CD14-positive monocyte (primary cell): ENCODE measurements at regions of chr17 and their contacts with region 1.

Region 1: DNA sequence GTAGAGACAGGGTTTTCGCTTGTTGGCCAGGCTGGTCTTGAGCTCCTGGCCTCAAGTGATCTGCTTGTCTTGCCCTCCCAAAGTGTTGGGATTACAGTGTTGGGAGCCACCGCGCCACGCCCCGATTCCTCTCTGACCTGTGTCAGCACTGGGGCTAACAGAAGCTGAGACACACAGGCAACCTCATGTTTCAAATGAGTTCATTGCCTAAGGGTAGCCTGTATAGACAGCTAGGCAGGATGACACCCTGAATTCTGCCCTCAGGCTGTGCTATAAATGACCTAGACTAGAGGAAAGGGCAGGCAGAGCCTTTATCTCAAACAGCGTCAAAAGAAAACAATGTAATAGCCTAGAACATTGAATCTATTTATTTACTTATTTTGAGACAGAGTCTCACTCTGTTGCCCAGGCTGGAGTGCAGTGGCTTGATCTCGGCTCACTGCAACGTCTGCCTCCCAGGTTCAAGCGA is 2.3 kb upstream of the CDK3 start:
- DNase-seq: no peak
- H3K4me3 ChIP-seq: no peak overlapping the region
- H3K4me3 Mint-ChIP-seq: no peak overlapping the region
- H3K27ac ChIP-seq: no peak overlapping the region
- H3K27ac Mint-ChIP-seq: peak overlapping the region in 1 of 7 donors; percentile 13
- H3K4me1 ChIP-seq: peaks cover 21 to 24% of the 10 kb centered on the region in 2 donors
- H3K4me1 Mint-ChIP-seq: peaks cover 20% of the 10 kb centered on the region
- H3K27me3 ChIP-seq: no peaks in the 10 kb centered on the region
- H3K27me3 Mint-ChIP-seq: peaks cover 0 to 2% (median 0%) of the 10 kb centered on the region in 3 donors
- CTCF ChIP-seq: no peak

Region 2: GRCh38 chr17:75970011-75970523 is 28.3 kb before region 1 on chr17:
- intact Hi-C with region 1: loop called in 1 of 2 experiments (anchors 2 kb)
- DNase-seq: peak; percentile 70 to 78 (median 73)
- H3K4me3 ChIP-seq: peak overlapping the region; percentile 10 to 66 (median 31)
- H3K4me3 Mint-ChIP-seq: peak overlapping the region; percentile 31 to 74
- H3K27ac ChIP-seq: peak overlapping the region; percentile 85 to 89
- H3K27ac Mint-ChIP-seq: peak overlapping the region; percentile 84 to 96 (median 94)
- H3K4me1 ChIP-seq: peaks cover 29 to 40% of the 10 kb centered on the region in 2 donors
- H3K4me1 Mint-ChIP-seq: peaks cover 45% of the 10 kb centered on the region
- H3K27me3 ChIP-seq: no peaks in the 10 kb centered on the region
- H3K27me3 Mint-ChIP-seq: peaks cover 0 to 1% (median 0%) of the 10 kb centered on the region in 3 donors
- CTCF ChIP-seq: no peak